ENCODE measurements at regions of chr1 and their contacts with region 1.

Region 1: GRCh38 chr1:236281654-236282424 is at the start of gene ERO1B:
- DNase-seq: peak; percentile 96 to 99 (median 96)
- H3K4me3 ChIP-seq: peak within 1 kb of the TSS; percentile 80 to 84
- H3K4me3 Mint-ChIP-seq: peak within 1 kb of the TSS; percentile 85 to 98 (median 96)
- H3K27ac ChIP-seq: peak within 1 kb of the TSS; percentile 81
- H3K27ac Mint-ChIP-seq: peak within 1 kb of the TSS; percentile 88 to 98 (median 95)
- H3K4me1 ChIP-seq: peaks cover 34% of the 10 kb centered on the region
- H3K4me1 Mint-ChIP-seq: peaks cover 32 to 61% (median 44%) of the 10 kb centered on the region in 4 donors
- H3K27me3 ChIP-seq: no peaks in the 10 kb centered on the region
- H3K27me3 Mint-ChIP-seq: no peaks in the 10 kb centered on the region
- total RNA-seq, gene ERO1B: 23.0 to 24.5 TPM

Region 2: GRCh38 chr1:236103646-236104218 is 178.1 kb before region 1 on chr1:
- CTCF ChIA-PET with region 1: interaction called, 40 read pairs
- POLR2A ChIA-PET with region 1: interaction called, 3 read pairs
- intact Hi-C with region 1: no loop called
- DNase-seq: peak; percentile 53 to 67 (median 58)
- H3K4me3 ChIP-seq: no peak overlapping the region
- H3K4me3 Mint-ChIP-seq: peak overlapping the region in 1 of 8 donors; percentile 23
- H3K27ac ChIP-seq: no peak overlapping the region
- H3K27ac Mint-ChIP-seq: no peak overlapping the region
- H3K4me1 ChIP-seq: no peaks in the 10 kb centered on the region
- H3K4me1 Mint-ChIP-seq: peaks cover 2 to 5% (median 4%) of the 10 kb centered on the region in 4 donors
- H3K27me3 ChIP-seq: no peaks in the 10 kb centered on the region
- H3K27me3 Mint-ChIP-seq: peaks cover 0 to under 1% of the 10 kb centered on the region in 2 donors

Region 3: GRCh38 chr1:236204656-236205055 is 77.2 kb before region 1 on chr1:
- CTCF ChIA-PET with region 1: no interaction called
- POLR2A ChIA-PET with region 1: no interaction called
- intact Hi-C with region 1: no loop called
- DNase-seq: no peak
- H3K4me3 ChIP-seq: no peak overlapping the region
- H3K4me3 Mint-ChIP-seq: no peak overlapping the region
- H3K27ac ChIP-seq: no peak overlapping the region
- H3K27ac Mint-ChIP-seq: no peak overlapping the region
- H3K4me1 ChIP-seq: no peaks in the 10 kb centered on the region
- H3K4me1 Mint-ChIP-seq: no peaks in the 10 kb centered on the region
- H3K27me3 ChIP-seq: no peaks in the 10 kb centered on the region
- H3K27me3 Mint-ChIP-seq: no peaks in the 10 kb centered on the region

Region 4: GRCh38 chr1:236394905-236395780 is 113.3 kb after region 1 on chr1:
- CTCF ChIA-PET with region 1: no interaction called
- POLR2A ChIA-PET with region 1: interaction called, 18 read pairs
- intact Hi-C with region 1: loop called (anchors 1 kb)
- DNase-seq: peak; percentile 56 to 68 (median 60)
- H3K4me3 ChIP-seq: peak overlapping the region; percentile 47 to 71
- H3K4me3 Mint-ChIP-seq: peak overlapping the region; percentile 89 to 96 (median 93)
- H3K27ac ChIP-seq: peak overlapping the region; percentile 67
- H3K27ac Mint-ChIP-seq: peak overlapping the region; percentile 68 to 95 (median 86)
- H3K4me1 ChIP-seq: peaks cover 20% of the 10 kb centered on the region
- H3K4me1 Mint-ChIP-seq: peaks cover 19 to 51% (median 34%) of the 10 kb centered on the region in 4 donors
- H3K27me3 ChIP-seq: no peaks in the 10 kb centered on the region
- H3K27me3 Mint-ChIP-seq: peaks cover 4 to 17% of the 10 kb centered on the region in 2 donors

Region 5: DNA sequence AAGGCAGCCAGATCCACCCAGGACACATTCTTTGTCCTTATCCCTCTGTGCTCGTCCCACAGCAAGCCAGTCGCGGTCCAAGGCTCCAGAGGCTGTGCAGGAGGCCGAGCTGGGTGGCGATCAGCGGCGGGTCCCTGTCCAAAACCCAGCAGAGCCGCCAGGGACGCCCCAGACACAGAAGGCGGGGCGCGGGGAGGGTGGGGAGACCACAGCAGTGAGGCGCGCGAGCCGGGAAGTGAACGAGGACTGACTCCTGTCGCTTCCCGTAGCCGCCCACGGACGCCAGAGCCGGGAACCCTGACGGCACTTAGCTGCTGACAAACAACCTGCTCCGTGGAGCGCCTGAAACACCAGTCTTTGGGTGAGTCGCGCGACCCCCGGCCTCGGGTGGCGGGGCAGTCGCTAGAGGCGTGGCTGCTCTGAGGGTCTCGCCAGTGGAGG is 241.9 kb after region 1 on chr1 and contains the start of gene LGALS8:
- CTCF ChIA-PET with region 1: no interaction called
- POLR2A ChIA-PET with region 1: interaction called, 7 read pairs
- intact Hi-C with region 1: loop called (anchors 5 kb)
- DNase-seq: peak; percentile 80 to 88 (median 84)
- H3K4me3 ChIP-seq: peak within 1 kb of the TSS; percentile 87 to 96
- H3K4me3 Mint-ChIP-seq: peak within 1 kb of the TSS; percentile 94 to 100 (median 99)
- H3K27ac ChIP-seq: peak within 1 kb of the TSS; percentile 94
- H3K27ac Mint-ChIP-seq: peak within 1 kb of the TSS; percentile 91 to 99 (median 99)
- H3K4me1 ChIP-seq: peaks cover 22% of the 10 kb centered on the region
- H3K4me1 Mint-ChIP-seq: peaks cover 19 to 63% (median 35%) of the 10 kb centered on the region in 4 donors
- H3K27me3 ChIP-seq: no peaks in the 10 kb centered on the region
- H3K27me3 Mint-ChIP-seq: no peaks in the 10 kb centered on the region
- total RNA-seq, gene LGALS8: 193 to 196 TPM

Region 6: GRCh38 chr1:236795035-236795756 is 513.4 kb after region 1 on chr1 and contains the start of gene MTR:
- CTCF ChIA-PET with region 1: no interaction called
- POLR2A ChIA-PET with region 1: interaction called, 11 read pairs
- intact Hi-C with region 1: loop called (anchors 5 kb)
- DNase-seq: peak; percentile 95 to 98 (median 95)
- H3K4me3 ChIP-seq: peak within 1 kb of the TSS; percentile 83 to 97
- H3K4me3 Mint-ChIP-seq: peak within 1 kb of the TSS; percentile 92 to 98 (median 96)
- H3K27ac ChIP-seq: peak within 1 kb of the TSS; percentile 99
- H3K27ac Mint-ChIP-seq: peak within 1 kb of the TSS; percentile 95 to 99 (median 98)
- H3K4me1 ChIP-seq: peaks cover 39% of the 10 kb centered on the region
- H3K4me1 Mint-ChIP-seq: peaks cover 25 to 49% (median 31%) of the 10 kb centered on the region in 4 donors
- H3K27me3 ChIP-seq: no peaks in the 10 kb centered on the region
- H3K27me3 Mint-ChIP-seq: peaks cover 1 to 5% of the 10 kb centered on the region in 2 donors
- total RNA-seq, gene MTR: 68.4 to 71.0 TPM